Cardiac septum (tissue), 1 donor: ENCODE measurements at regions of chr14 and their contacts with region 1.

Region 1: DNA sequence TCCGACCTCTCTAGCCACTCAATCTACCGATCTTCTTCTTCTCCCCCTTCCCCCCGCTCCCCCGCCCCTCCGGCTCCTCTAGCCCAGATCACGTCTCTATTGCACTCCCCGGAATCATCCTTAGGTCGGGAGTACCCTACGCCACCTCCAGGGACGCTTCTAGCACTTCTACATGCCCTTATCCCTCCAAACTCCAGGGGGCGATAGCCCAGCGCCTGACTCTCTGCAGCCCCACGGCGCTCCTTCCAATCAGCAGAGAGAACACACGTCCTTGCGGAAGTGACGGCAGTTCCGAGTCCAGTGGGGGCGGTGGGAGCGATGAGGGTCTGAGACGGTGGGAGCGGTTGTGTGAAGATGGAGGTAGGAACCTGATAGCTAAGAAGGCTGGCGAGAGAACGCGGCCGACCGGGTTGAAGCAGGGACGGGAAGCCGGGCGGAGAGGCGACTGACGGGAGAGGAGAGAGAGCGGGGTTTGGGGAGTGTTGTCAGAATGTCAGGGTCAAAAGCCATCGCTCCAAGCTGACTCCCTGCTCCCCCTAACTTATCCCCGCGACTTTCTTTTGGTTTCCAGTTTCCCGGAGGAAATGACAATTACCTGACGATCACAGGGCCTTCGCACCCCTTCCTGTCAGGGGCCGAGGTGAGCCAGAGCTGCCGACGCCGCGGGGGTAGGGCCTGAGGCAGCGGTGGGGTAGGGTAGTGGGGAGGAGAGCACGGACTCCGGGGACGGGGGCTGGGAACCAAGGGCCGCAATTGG is at the starts of genes RAB2B and TOX4:
- DNase-seq: peak; percentile 98
- total RNA-seq, gene RAB2B: 22.6 TPM
- total RNA-seq, gene TOX4: 75.2 TPM

Region 2: GRCh38 chr14:21367582-21368144 is 109.4 kb before region 1 on chr14:
- intact Hi-C with region 1: no loop called
- DNase-seq: no peak

Region 3: DNA sequence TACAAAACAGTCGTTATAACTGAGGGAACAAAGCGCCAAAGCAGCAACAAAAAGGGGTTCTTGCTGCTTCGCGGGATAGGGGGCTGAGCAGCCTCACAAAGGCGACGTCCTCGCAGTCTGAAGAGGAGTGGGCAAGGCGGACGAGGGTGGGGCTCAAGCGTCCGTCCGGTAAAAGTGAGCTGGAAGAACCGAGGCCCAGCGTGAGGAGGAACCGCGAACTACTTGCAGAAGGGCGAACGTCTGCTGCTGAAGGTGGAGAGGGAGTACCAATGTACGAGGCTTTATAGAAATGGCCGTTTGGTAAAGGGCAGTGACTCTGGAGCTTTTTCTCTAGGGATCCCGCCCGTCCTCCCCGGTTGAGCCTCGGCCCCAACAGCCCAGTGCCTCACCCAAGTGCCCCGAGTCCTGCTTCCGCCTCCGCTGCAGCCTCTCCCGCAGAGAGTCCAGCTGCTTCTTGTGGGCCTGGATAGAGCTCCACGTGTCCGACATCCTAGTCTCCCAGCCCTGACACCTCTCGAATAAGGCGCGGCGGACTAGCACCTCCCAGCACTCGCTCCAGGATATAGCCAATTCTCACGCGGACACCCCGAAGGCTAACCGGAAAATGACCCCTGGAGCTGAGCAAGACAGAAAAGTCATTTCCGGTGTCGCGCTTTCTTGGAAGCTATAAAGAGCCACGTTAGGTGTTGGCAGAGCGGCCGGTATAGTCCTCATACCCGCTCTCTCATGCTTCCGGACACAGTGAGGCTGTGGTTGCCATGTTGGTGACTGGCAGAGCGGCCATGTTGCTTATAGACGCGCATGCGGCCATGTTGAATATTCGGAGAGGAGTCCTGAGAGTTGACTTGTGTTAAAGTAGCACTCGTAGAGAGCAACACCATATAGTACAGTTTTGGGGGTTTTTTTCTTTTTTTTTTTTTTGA is 33.9 kb after region 1 on chr14 and contains the start of gene METTL3:
- intact Hi-C with region 1: loop called (anchors 5 kb)
- DNase-seq: peak; percentile 98
- total RNA-seq, gene METTL3: 28.1 TPM